ENCODE measurements at regions of chr1 and their contacts with region 1.

Region 1: DNA sequence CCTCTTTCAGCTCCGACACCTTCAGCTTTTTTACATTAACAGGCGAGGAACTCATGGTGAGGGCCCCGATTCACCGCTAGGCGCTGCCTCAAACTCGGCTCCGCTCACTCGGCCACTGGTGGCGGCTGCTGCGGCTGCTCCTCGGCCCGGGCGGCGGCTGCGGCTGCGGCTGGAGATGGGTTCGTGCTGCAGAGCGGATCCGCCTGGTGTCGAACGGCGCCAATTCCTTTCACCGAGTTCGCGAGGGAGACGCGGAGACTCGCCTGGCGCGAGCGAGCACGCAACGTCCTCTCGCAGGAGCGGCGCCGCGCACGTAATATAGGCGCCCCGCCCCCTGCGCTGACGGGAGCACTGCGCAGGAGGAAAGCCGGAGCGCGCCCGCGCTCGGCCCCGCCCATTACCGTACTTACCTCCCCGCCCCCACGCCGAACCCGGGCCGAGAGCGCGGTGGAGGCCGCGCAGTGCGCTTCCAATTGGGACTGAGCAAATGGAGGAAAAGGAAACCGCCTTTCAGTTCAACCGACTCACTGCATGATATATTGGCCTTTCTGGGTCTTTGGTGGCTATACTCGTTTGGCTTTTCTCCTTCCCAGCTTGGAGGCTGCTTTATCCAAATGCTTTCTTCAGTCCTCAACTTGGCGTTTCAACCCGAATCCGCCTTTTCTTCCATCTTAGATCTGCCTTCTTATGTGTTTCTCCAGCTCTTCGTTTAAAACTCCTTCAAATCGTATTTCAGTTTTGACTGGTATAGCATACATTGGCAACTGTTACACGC is at the start of gene HNRNPU:
- DNase-seq: peak; percentile 98
- ATAC-seq: peak; percentile 90 to 92
- total RNA-seq, gene HNRNPU: 167 to 204 TPM

Region 2: GRCh38 chr1:244835276-244836134 is 28.9 kb before region 1 on chr1 and contains the start of gene COX20:
- intact Hi-C with region 1: loop called in 1 of 2 experiments (anchors 2 kb)
- DNase-seq: peak; percentile 94
- ATAC-seq: peak; percentile 89 to 91
- total RNA-seq, gene COX20: 61.2 to 73.1 TPM